Activated CD4-positive, alpha-beta memory T cell treated with anti-CD3 and anti-CD28 coated beads for 36 hours (primary cell): ENCODE measurements at regions of chr7 and their contacts with region 1.

Region 1: DNA sequence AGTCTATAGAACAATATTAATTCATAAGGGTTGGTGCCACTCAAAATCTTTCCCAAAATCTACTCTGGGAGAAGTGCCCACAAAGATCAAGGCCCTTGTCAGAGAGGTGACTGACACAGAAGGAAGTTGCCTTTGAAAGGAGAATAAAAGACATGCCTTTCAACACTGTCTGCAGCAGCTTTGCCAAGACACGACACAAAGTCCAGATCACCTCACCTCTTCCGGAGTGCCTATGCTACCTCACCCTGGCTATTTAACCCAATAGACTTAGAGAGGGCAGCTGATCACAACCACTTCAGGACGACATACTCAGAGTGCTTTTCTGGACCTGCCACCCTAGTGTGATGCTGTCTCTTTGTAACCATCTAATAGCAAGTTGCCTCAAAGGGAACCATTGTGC is 49.0 kb upstream of the YAE1 start:
- DNase-seq: no peak
- H3K4me3 Mint-ChIP-seq: no peak overlapping the region
- H3K27ac Mint-ChIP-seq: no peak overlapping the region
- H3K4me1 Mint-ChIP-seq: no peaks in the 10 kb centered on the region
- H3K27me3 Mint-ChIP-seq: peaks cover 4% of the 10 kb centered on the region

Region 2: DNA sequence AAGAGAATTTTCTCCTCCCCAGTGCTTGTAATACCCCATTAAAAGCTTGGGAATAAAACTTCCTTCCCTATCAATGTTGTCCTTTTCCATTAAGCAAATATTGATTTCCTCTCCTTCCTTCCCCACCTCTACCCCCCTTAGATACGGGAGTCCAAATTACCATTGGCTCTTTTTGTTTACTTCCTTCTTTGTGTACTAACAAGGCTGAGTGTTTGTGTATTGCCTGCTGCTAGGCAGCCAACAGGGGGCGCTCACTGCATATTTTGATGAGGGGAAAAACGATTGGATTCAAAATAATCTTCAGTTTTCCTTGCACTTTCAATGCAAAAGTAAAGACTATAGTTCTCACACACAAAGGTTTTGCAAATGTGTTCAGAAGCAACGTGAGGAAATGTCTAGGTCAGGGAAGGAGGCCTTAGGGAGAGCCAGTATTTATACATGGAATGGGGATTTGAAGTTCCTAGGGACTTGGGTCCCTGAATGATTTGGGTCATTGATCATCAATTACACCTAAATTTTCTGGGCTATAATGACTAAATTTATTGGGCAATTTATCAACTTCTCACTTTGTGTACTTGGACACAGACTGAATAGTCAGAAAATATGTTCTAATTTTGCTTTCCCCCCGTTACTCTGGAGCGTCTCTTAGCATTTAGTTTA is 584.6 kb before region 1 on chr7:
- CTCF ChIA-PET with region 1: interaction called, 6 read pairs
- POLR2A ChIA-PET with region 1: no interaction called
- intact Hi-C with region 1: loop called (anchors 1 kb)
- DNase-seq: peak; percentile 65
- H3K4me3 Mint-ChIP-seq: no peak overlapping the region
- H3K27ac Mint-ChIP-seq: no peak overlapping the region
- H3K4me1 Mint-ChIP-seq: no peaks in the 10 kb centered on the region
- H3K27me3 Mint-ChIP-seq: peaks cover 5% of the 10 kb centered on the region